ENCODE measurements at regions of chr19 and their contacts with region 1.

Region 1: DNA sequence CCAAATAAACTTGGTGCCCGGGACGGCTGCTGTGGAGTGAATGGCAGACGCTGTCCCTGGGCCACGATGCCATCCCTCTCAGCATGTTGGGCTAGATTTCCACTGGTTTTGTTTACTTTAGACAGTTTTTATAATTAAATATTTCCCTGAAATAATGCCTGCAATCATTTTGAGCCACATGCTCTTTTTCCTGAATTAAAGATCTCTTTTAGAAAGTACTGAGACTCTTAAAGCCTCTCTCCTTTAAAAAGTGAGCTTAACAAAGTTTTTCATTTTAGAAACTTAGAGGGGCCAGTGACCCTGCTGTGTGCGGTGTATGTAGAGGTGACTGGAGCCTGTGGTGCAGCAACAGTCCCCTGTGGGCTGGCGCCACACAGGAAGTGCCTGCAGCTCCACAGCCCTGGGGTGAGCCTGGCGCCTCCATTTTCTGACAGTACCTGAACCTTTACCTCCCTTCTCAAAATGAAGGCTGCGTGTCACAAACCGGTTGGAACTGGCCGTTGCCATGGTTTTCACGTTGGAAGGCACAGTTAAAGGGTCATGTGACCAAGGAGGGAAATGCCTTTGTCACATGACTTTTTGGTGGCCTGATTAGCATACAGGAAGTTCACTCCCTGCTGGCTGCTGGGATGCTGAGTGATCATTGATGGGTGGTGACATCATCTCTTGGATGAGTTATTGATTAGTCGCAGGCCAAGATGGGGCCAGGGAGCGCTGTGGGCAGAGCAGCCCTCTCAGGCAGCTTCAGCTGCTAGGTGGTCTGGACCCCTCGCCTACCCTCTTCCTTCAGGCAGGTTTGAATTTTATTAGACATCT is 26.3 kb downstream of the TSSK6 start:
- DNase-seq: peak; percentile 73
- ATAC-seq: peak; percentile 84
- H3K4me3 ChIP-seq: no peak overlapping the region
- H3K27ac ChIP-seq: peak overlapping the region; percentile 82
- H3K4me1 ChIP-seq: peaks cover 28% of the 10 kb centered on the region
- H3K27me3 ChIP-seq: no peaks in the 10 kb centered on the region
- CTCF ChIP-seq: no peak
- EP300 ChIP-seq: no peak
- POLR2A ChIP-seq: peak; percentile 70; the same call in 1 of the 2 replicates
- RAD21 ChIP-seq: no peak

Region 2: DNA sequence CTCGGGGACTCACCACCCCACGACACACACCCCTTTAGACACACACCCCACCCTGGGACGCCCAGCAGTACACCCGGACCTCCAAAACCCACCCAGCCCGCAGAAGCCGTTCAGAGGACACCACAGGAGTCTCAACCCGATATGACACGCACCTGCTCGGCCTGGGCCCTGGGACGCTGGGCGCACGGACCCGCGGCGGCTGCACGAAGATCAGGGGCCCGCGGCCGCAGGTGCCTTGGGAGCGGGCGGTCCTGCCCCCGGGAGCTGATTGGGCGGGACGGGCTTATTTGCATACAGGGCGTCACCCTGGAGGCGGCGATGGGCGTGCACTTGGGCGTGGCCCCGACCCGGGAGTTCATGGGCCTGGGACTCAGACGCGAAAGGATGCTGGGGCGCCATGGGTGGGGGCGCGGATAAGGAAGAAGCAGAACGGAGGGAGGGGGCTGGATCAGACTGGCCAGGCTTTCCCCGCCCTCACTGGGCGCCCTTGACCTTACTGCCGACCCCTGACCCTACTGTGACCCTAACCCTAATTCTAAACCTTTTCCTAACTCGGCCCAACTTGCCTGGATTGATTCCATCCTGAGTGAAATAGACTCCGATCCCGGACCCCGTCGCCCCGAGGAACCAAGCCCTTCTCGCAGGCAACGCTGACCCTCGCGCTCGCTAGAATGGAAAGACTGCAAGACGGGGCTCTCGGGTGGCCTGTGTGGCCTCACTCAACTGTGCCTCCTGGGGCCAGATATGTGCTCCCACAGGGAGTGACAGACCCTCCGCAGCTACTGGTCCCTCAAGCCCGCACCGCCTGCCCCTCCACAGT is 318.8 kb before region 1 on chr19 and contains the start of gene MEF2B:
- CTCF ChIA-PET with region 1: interaction called, 11 read pairs
- POLR2A ChIA-PET with region 1: no interaction called
- RAD21 ChIA-PET with region 1: interaction called, 7 read pairs
- SMC1A ChIA-PET with region 1: interaction called, 3 read pairs
- in situ Hi-C with region 1: no loop called
- intact Hi-C with region 1: no loop called
- DNase-seq: no peak
- ATAC-seq: peak; percentile 95
- H3K4me3 ChIP-seq: peak within 1 kb of the TSS; percentile 89
- H3K27ac ChIP-seq: 0 out of 2 replicates have a peak within 1 kb of the TSS, but pooled peaks have one; percentile 27
- H3K4me1 ChIP-seq: peaks cover 30% of the 10 kb centered on the region
- H3K27me3 ChIP-seq: no peaks in the 10 kb centered on the region
- CTCF ChIP-seq: no peak
- EP300 ChIP-seq: no peak
- POLR2A ChIP-seq: peak; percentile 93
- RAD21 ChIP-seq: no peak
- polyA plus RNA-seq, gene MEF2B: 0.09 to 0.21 TPM

Region 3: DNA sequence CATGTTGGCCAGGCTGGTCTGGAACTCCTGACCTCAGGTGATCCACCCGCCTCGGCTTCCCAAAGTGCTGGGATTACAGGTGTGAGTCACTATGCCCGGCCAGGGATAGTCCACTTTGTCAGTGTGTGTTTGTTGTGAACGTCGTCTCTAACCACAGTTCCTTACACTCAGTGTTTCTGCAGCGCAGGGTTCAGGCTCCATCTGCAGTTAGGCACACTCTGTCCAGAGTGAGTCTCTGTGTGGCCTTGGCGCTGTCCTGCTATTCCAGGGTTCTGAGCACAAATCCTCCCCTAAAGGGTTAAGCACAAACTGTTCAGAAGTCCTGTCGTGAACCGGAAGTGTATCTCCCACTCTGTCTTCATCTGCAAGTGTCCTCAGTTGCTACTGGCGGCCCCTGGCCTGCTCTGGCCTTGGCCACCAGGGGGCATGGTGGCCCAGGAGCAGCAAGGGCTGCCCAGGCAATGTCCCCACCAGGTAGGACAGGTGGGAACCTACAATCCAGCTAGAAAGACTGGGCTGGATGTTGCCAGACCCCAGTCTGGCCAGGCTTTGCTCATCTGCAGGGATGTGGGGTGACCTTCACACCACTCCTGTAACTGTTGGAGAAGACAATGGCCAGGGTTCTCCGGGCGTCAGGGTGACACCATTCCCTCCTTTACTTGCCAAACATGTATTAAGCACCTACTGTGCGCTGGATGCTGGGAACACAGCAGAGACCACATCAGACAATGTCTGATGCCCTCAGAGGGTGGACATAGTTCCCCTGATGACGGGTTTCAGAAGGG is 122.3 kb before region 1 on chr19:
- CTCF ChIA-PET with region 1: interaction called, 223 read pairs
- POLR2A ChIA-PET with region 1: interaction called, 16 read pairs
- RAD21 ChIA-PET with region 1: interaction called, 72 read pairs
- SMC1A ChIA-PET with region 1: interaction called, 97 read pairs
- in situ Hi-C with region 1: loop called (anchors 5 kb)
- intact Hi-C with region 1: loop called (anchors 1 kb)
- DNase-seq: no peak
- ATAC-seq: peak; percentile 95
- H3K4me3 ChIP-seq: no peak overlapping the region
- H3K27ac ChIP-seq: no peak overlapping the region
- H3K4me1 ChIP-seq: peaks cover 3% of the 10 kb centered on the region; the same call in 1 of the 2 replicates
- H3K27me3 ChIP-seq: no peaks in the 10 kb centered on the region
- CTCF ChIP-seq: peak; percentile 94 to 99 (median 96)
- EP300 ChIP-seq: no peak
- POLR2A ChIP-seq: no peak
- RAD21 ChIP-seq: peak; percentile 85

Region 4: GRCh38 chr19:19379279-19379926 is 109.7 kb before region 1 on chr19:
- CTCF ChIA-PET with region 1: interaction called, 36 read pairs
- POLR2A ChIA-PET with region 1: no interaction called
- RAD21 ChIA-PET with region 1: interaction called, 23 read pairs
- SMC1A ChIA-PET with region 1: interaction called, 7 read pairs
- in situ Hi-C with region 1: no loop called
- intact Hi-C with region 1: no loop called
- DNase-seq: no peak
- ATAC-seq: no peak
- H3K4me3 ChIP-seq: no peak overlapping the region
- H3K27ac ChIP-seq: no peak overlapping the region
- H3K4me1 ChIP-seq: peaks cover 6% of the 10 kb centered on the region; the same call in 1 of the 2 replicates
- H3K27me3 ChIP-seq: no peaks in the 10 kb centered on the region
- CTCF ChIP-seq: no peak
- EP300 ChIP-seq: no peak
- POLR2A ChIP-seq: no peak
- RAD21 ChIP-seq: no peak

Region 5: GRCh38 chr19:19404879-19405860 is 83.9 kb before region 1 on chr19 and contains the start of gene GATAD2A:
- CTCF ChIA-PET with region 1: interaction called, 83 read pairs
- POLR2A ChIA-PET with region 1: interaction called, 3 read pairs
- RAD21 ChIA-PET with region 1: interaction called, 55 read pairs
- SMC1A ChIA-PET with region 1: interaction called, 57 read pairs
- in situ Hi-C with region 1: no loop called
- intact Hi-C with region 1: no loop called
- DNase-seq: peak; percentile 44
- ATAC-seq: peak; percentile 90
- H3K4me3 ChIP-seq: peak within 1 kb of the TSS; percentile 79
- H3K27ac ChIP-seq: peak within 1 kb of the TSS; percentile 62
- H3K4me1 ChIP-seq: peaks cover 19% of the 10 kb centered on the region
- H3K27me3 ChIP-seq: no peaks in the 10 kb centered on the region
- CTCF ChIP-seq: peak; percentile 16 to 58 (median 46); a peak in 3 of 6 replicates
- EP300 ChIP-seq: no peak
- POLR2A ChIP-seq: peak; percentile 78
- RAD21 ChIP-seq: peak; percentile 32; the same call in 1 of the 2 replicates
- polyA plus RNA-seq, gene GATAD2A: 2.6 to 2.7 TPM

Region 6: GRCh38 chr19:19418555-19419260 is 70.4 kb before region 1 on chr19:
- CTCF ChIA-PET with region 1: interaction called, 15 read pairs
- POLR2A ChIA-PET with region 1: no interaction called
- RAD21 ChIA-PET with region 1: interaction called, 4 read pairs
- SMC1A ChIA-PET with region 1: interaction called, 7 read pairs
- in situ Hi-C with region 1: no loop called
- intact Hi-C with region 1: no loop called
- DNase-seq: no peak
- ATAC-seq: peak; percentile 25
- H3K4me3 ChIP-seq: peak overlapping the region; percentile 19; the same call in 1 of the 2 replicates
- H3K27ac ChIP-seq: peak overlapping the region; percentile 5; the same call in 1 of the 2 replicates
- H3K4me1 ChIP-seq: peaks cover 25% of the 10 kb centered on the region
- H3K27me3 ChIP-seq: no peaks in the 10 kb centered on the region
- CTCF ChIP-seq: no peak
- EP300 ChIP-seq: no peak
- POLR2A ChIP-seq: no peak
- RAD21 ChIP-seq: no peak

Region 7: GRCh38 chr19:19434483-19435045 is 54.5 kb before region 1 on chr19:
- CTCF ChIA-PET with region 1: no interaction called
- POLR2A ChIA-PET with region 1: no interaction called
- RAD21 ChIA-PET with region 1: no interaction called
- SMC1A ChIA-PET with region 1: no interaction called
- in situ Hi-C with region 1: no loop called
- intact Hi-C with region 1: no loop called
- DNase-seq: no peak
- ATAC-seq: no peak
- H3K4me3 ChIP-seq: no peak overlapping the region
- H3K27ac ChIP-seq: no peak overlapping the region
- H3K4me1 ChIP-seq: peaks cover 4% of the 10 kb centered on the region
- H3K27me3 ChIP-seq: no peaks in the 10 kb centered on the region
- CTCF ChIP-seq: no peak
- EP300 ChIP-seq: no peak
- POLR2A ChIP-seq: no peak
- RAD21 ChIP-seq: no peak

Region 8: DNA sequence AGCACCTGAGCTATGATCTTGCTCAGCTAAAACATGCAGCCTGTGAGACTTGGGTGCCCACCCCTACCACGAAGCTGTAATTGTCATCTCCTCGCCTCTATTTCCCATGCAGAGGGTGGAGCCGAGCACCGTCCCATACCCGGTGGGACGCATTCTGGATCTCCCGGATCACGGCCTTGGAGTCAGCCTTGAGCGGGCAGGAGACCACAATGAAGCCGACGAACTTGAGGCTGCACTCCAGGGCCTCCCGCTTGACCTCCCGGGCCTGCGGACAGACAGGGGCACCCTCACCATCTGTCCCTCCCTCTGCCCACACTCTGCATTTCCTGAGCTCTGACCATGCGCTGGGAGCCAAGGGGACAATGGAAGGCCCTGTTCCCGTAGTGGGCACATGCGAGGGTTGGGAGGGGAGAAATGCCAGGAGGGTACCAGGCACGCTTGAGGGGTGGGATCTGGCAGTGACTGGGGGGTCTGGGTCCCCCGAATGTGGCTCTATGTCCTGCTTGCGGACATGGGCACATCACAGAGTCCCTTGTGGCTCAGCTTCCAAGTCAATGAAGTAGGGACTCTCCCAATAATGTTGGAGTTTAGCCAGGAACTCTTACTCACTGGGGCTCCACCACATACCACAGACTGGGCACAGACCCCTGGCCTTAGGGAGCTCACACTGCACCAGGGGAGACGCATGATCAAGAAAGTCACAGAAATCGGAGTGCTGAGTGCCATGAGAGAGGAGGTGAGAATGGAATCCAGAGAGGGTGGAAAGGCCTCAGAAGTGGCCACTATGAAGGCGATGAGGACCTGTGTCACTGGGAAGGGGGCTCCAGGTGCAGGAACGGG is 163.6 kb after region 1 on chr19:
- CTCF ChIA-PET with region 1: no interaction called
- POLR2A ChIA-PET with region 1: no interaction called
- RAD21 ChIA-PET with region 1: no interaction called
- SMC1A ChIA-PET with region 1: no interaction called
- in situ Hi-C with region 1: no loop called
- intact Hi-C with region 1: no loop called
- DNase-seq: no peak
- ATAC-seq: no peak
- H3K4me3 ChIP-seq: no peak overlapping the region
- H3K27ac ChIP-seq: no peak overlapping the region
- H3K4me1 ChIP-seq: no peaks in the 10 kb centered on the region
- H3K27me3 ChIP-seq: no peaks in the 10 kb centered on the region
- CTCF ChIP-seq: no peak
- EP300 ChIP-seq: no peak
- POLR2A ChIP-seq: no peak; the same call in 1 of the 2 replicates
- RAD21 ChIP-seq: no peak

Measured in GM12878 (cell line).